MCF 10A (cell line): ENCODE measurements at regions of chr2 and their contacts with region 1.

Region 1: DNA sequence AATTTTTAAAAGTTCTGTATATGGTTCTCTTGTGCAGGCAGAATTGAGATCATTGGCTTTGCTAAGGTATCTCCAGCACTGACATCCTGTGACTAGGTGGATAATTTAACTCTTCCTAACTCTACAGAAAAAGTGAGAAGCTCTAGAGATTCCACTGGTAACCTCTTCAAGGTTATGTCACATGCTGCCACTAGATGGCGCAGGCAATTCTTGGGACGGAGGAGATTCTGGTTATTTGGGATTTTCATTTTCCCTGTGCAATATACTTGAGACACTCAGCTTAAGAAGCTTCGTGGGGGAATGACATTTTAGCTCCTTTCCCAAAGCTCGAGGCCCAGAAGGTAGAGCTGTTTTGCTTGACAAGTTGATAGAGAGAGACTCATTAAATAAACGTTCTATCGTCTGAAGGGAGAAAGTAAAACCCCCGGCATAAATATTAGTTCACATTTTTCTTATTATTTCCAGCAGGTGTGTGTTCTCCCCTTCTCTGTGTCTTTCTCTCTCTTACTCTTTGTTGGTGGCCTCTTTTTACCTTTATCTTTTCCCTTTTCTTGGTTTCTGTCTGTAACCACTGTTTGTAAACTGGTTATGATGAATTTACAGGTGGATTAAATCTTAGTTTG is 26.6 kb upstream of the LANCL1 start:
- DNase-seq: peak; percentile 51
- H3K4me3 Mint-ChIP-seq: no peak overlapping the region
- H3K27ac Mint-ChIP-seq: no peak overlapping the region
- H3K4me1 Mint-ChIP-seq: no peaks in the 10 kb centered on the region
- H3K27me3 Mint-ChIP-seq: no peaks in the 10 kb centered on the region
- CTCF ChIP-seq: peak; percentile 50

Region 2: GRCh38 chr2:210475706-210476105 is 27.4 kb before region 1 on chr2:
- CTCF ChIA-PET with region 1: interaction called, 16 read pairs
- POLR2A ChIA-PET with region 1: no interaction called
- intact Hi-C with region 1: no loop called
- DNase-seq: peak; percentile 10
- H3K4me3 Mint-ChIP-seq: peak overlapping the region; percentile 84
- H3K27ac Mint-ChIP-seq: peak overlapping the region; percentile 69
- H3K4me1 Mint-ChIP-seq: peaks cover 11% of the 10 kb centered on the region
- H3K27me3 Mint-ChIP-seq: no peaks in the 10 kb centered on the region
- CTCF ChIP-seq: no peak

Region 3: GRCh38 chr2:210481601-210482175 is 21.4 kb before region 1 on chr2:
- CTCF ChIA-PET with region 1: interaction called, 16 read pairs
- POLR2A ChIA-PET with region 1: no interaction called
- intact Hi-C with region 1: no loop called
- DNase-seq: no peak
- H3K4me3 Mint-ChIP-seq: no peak overlapping the region
- H3K27ac Mint-ChIP-seq: no peak overlapping the region
- H3K4me1 Mint-ChIP-seq: peaks cover 6% of the 10 kb centered on the region
- H3K27me3 Mint-ChIP-seq: no peaks in the 10 kb centered on the region
- CTCF ChIP-seq: no peak

Region 4: GRCh38 chr2:210517252-210517651 is 14.1 kb after region 1 on chr2:
- CTCF ChIA-PET with region 1: interaction called, 15 read pairs
- POLR2A ChIA-PET with region 1: no interaction called
- intact Hi-C with region 1: no loop called
- DNase-seq: no peak
- H3K4me3 Mint-ChIP-seq: no peak overlapping the region
- H3K27ac Mint-ChIP-seq: no peak overlapping the region
- H3K4me1 Mint-ChIP-seq: no peaks in the 10 kb centered on the region
- H3K27me3 Mint-ChIP-seq: no peaks in the 10 kb centered on the region
- CTCF ChIP-seq: no peak